ENCODE measurements at regions of chr16 and their contacts with region 1.

Region 1: GRCh38 chr16:68085259-68086071 is at the start of gene NFATC3:
- DNase-seq: peak; percentile 94 to 99
- H3K4me3 ChIP-seq: peak within 1 kb of the TSS; percentile 90 to 96
- H3K27ac ChIP-seq: peak within 1 kb of the TSS; percentile 98 to 99
- H3K4me1 ChIP-seq: peaks cover 11 to 21% of the 10 kb centered on the region in 2 donors
- H3K27me3 ChIP-seq: no peaks in the 10 kb centered on the region
- CTCF ChIP-seq: no peak
- total RNA-seq, gene NFATC3: 36.4 TPM

Region 2: GRCh38 chr16:67883872-67884261 is 201.6 kb before region 1 on chr16:
- intact Hi-C with region 1: no loop called
- DNase-seq: peak in 1 of 2 donors; percentile 73
- H3K4me3 ChIP-seq: peak overlapping the region in 1 of 2 donors; percentile 45
- H3K27ac ChIP-seq: peak overlapping the region; percentile 67 to 75
- H3K4me1 ChIP-seq: peaks cover 6 to 13% of the 10 kb centered on the region in 2 donors
- H3K27me3 ChIP-seq: no peaks in the 10 kb centered on the region
- CTCF ChIP-seq: peak; percentile 77 to 94 (median 79)

Region 3: DNA sequence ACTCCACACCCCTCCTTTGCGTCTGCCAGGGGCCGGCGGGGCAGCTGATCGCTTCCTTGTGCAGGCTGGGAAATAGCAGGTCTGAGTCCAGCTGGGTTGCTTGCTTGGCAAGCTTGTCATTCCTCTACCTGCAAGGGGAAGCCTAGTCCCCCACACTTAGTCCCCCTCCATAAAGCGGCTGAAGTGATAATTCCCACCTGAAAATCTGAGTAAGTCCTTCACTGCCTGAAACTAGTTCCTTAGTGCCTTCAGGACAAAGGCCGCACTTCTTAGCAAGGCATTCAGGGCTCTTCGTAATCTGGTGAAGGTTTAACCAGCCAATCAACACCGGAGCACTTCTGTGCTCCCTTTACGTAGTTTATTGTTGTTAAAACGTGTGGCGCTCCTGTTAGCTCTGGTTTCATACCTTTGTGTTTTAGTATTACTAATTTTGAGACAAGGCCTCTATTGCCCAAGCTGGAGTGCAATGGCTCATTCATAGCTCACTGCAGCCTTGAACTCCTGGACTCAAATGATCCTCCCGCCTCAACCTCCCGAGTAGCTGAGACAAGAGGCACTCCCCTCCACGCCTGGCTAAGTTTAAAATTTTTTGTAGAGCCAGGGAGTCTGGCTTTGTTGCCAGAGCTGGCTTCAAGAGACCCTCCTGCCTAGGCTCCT is 191.6 kb before region 1 on chr16:
- intact Hi-C with region 1: no loop called
- DNase-seq: no peak
- H3K4me3 ChIP-seq: peak overlapping the region; percentile 99 to 100
- H3K27ac ChIP-seq: peak overlapping the region; percentile 96 to 99
- H3K4me1 ChIP-seq: peaks cover 19 to 44% of the 10 kb centered on the region in 2 donors
- H3K27me3 ChIP-seq: no peaks in the 10 kb centered on the region
- CTCF ChIP-seq: no peak

Region 4: GRCh38 chr16:68064791-68065365 is 20.6 kb before region 1 on chr16:
- intact Hi-C with region 1: loop called (anchors 1 kb)
- DNase-seq: peak in 1 of 2 donors; percentile 85
- H3K4me3 ChIP-seq: no peak overlapping the region
- H3K27ac ChIP-seq: peak overlapping the region; percentile 90 to 93
- H3K4me1 ChIP-seq: peaks cover 11 to 26% of the 10 kb centered on the region in 2 donors
- H3K27me3 ChIP-seq: no peaks in the 10 kb centered on the region
- CTCF ChIP-seq: peak; percentile 56 to 69 (median 64)

Region 5: GRCh38 chr16:68356249-68356918 is 270.9 kb after region 1 on chr16:
- intact Hi-C with region 1: no loop called
- DNase-seq: no peak
- H3K4me3 ChIP-seq: no peak overlapping the region
- H3K27ac ChIP-seq: no peak overlapping the region
- H3K4me1 ChIP-seq: no peaks in the 10 kb centered on the region
- H3K27me3 ChIP-seq: no peaks in the 10 kb centered on the region
- CTCF ChIP-seq: no peak

Region 6: DNA sequence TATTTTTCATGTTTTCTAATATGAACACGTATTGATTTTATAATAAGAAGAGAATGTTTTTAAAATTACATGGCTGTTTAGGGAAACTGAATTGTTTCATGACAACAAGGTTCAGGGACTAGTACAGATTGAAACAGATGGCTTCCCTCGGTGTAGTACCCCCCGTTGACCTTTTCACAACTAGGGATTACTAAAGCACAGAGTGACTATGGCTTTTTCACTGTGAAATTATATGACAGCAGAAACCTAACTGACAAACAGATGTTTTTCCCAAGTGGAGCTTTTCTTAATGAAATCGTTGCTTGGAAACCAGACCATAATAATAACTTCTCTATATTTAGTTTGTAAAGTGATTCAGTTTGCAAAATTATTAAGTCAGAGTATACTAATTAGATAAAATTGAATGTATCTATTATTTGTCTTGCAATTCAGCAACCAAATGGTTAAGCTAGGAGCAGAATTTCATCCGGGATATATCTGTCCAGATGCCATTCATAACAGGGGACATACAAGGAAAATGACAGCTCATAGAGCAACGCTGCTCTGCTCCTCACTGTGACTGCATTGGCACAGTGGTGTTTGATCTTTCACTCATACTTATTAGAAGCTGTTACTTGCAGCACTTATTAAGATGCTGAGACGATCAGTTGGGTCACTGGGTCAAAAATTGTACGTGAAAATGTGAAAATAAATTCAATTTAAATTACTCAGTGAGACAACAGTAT is 869.6 kb after region 1 on chr16:
- intact Hi-C with region 1: no loop called
- DNase-seq: no peak
- H3K4me3 ChIP-seq: no peak overlapping the region
- H3K27ac ChIP-seq: no peak overlapping the region
- H3K4me1 ChIP-seq: no peaks in the 10 kb centered on the region
- H3K27me3 ChIP-seq: no peaks in the 10 kb centered on the region
- CTCF ChIP-seq: no peak

Measured in ascending aorta (tissue), 2 donors.